ENCODE measurements at regions of chr1 and their contacts with region 1.

Region 1: GRCh38 chr1:99707535-99708142 is 58.8 kb downstream of the FRRS1 start:
- DNase-seq: peak; percentile 86
- H3K4me3 ChIP-seq: no peak overlapping the region
- H3K27ac ChIP-seq: no peak overlapping the region
- H3K4me1 ChIP-seq: peaks cover 4% of the 10 kb centered on the region
- H3K27me3 ChIP-seq: no peaks in the 10 kb centered on the region
- CTCF ChIP-seq: peak; percentile 58 to 71
- POLR2A ChIP-seq: no peak

Region 2: DNA sequence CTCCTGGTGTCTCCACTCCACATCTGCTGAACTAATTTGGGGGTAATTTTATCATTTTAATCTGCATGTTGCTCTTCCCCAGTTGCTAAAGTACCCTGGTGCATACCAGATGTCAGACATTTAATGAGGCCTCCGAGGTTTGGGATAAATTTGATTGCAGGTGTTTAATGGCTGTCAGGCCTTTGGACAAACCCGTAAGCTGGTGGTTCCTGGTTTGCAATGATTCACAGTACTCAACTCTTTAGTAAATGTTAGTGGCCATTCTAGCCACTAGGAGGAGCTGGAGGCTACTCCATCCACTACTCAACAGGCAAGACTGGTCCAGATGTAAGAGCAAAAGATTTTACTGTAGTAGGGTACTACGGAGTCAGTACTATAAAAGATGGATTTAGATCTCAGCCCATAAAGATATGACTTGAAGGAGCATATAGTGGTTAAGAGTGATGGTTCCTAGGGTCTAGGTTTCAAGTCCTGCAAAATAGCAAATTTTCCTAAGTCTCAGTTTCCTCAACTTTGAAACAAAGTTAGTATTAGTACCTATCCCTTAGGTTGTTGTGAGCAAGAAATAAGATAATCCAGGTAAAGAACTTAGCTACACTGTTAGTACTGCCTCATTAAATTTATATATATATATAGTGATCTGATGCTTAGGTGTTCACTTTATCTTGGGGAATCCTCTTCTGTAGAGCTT is 913.3 kb before region 1 on chr1:
- CTCF ChIA-PET with region 1: interaction called, 25 read pairs
- POLR2A ChIA-PET with region 1: no interaction called
- dilution Hi-C with region 1: no loop called
- intact Hi-C with region 1: loop called (anchors 1 kb)
- DNase-seq: peak; percentile 80
- H3K4me3 ChIP-seq: no peak overlapping the region
- H3K27ac ChIP-seq: no peak overlapping the region
- H3K4me1 ChIP-seq: no peaks in the 10 kb centered on the region
- H3K27me3 ChIP-seq: peaks cover 13 to 18% of the 10 kb centered on the region in 2 experiments
- CTCF ChIP-seq: peak; percentile 62 to 69
- POLR2A ChIP-seq: no peak

Region 3: GRCh38 chr1:99180343-99180808 is 527.3 kb before region 1 on chr1:
- CTCF ChIA-PET with region 1: interaction called, 63 read pairs
- POLR2A ChIA-PET with region 1: no interaction called
- dilution Hi-C with region 1: no loop called
- intact Hi-C with region 1: loop called (anchors 1 kb)
- DNase-seq: peak; percentile 90
- H3K4me3 ChIP-seq: no peak overlapping the region
- H3K27ac ChIP-seq: no peak overlapping the region
- H3K4me1 ChIP-seq: no peaks in the 10 kb centered on the region
- H3K27me3 ChIP-seq: no peaks in the 10 kb centered on the region
- CTCF ChIP-seq: peak; percentile 57 to 68
- POLR2A ChIP-seq: no peak

Region 4: DNA sequence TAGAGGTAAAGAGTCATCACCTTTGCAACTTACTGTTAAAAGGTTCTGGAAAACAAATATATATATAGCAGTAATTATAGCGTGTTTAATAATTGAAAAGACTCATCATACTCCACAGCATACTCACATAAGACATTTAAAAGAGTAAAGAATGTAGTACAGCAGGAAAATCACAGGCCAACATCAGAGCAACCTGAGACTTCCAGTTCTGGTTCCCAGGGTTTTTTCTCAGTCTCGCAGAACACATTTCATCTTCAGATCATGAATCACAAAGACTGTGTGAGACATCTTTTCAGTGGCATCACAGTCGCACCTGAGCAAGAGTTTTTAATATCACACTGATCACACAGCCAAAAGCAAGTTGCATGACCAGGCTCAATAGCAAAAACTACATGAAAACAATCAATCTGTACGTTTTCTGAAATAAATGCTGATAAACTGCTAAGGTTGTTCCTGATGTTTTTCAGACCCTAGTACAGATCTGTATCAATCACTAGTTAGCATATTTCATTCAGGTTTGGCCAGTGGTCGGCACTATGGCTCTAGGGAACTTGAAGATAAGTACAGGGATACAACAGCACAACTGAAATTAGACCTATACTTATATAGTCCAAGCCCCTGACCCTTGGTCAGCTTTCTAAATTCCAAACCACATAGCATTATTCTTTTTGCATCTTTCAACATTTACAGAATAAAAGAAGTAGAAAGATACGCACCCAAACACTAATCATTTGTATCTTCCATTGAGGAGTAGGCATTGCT is 300.8 kb before region 1 on chr1:
- CTCF ChIA-PET with region 1: interaction called, 3 read pairs
- POLR2A ChIA-PET with region 1: no interaction called
- dilution Hi-C with region 1: no loop called
- intact Hi-C with region 1: loop called (anchors 5 kb)
- DNase-seq: peak; percentile 17
- H3K4me3 ChIP-seq: no peak overlapping the region
- H3K27ac ChIP-seq: no peak overlapping the region
- H3K4me1 ChIP-seq: no peaks in the 10 kb centered on the region
- H3K27me3 ChIP-seq: peaks cover 0 to 2% of the 10 kb centered on the region in 2 experiments
- CTCF ChIP-seq: no peak
- POLR2A ChIP-seq: no peak

Region 5: GRCh38 chr1:99786751-99787501 is 79.3 kb after region 1 on chr1:
- CTCF ChIA-PET with region 1: no interaction called
- POLR2A ChIA-PET with region 1: no interaction called
- dilution Hi-C with region 1: no loop called
- intact Hi-C with region 1: no loop called
- DNase-seq: no peak
- H3K4me3 ChIP-seq: no peak overlapping the region
- H3K27ac ChIP-seq: no peak overlapping the region
- H3K4me1 ChIP-seq: no peaks in the 10 kb centered on the region
- H3K27me3 ChIP-seq: peaks cover 10 to 12% of the 10 kb centered on the region in 2 experiments
- CTCF ChIP-seq: no peak
- POLR2A ChIP-seq: no peak

Region 6: DNA sequence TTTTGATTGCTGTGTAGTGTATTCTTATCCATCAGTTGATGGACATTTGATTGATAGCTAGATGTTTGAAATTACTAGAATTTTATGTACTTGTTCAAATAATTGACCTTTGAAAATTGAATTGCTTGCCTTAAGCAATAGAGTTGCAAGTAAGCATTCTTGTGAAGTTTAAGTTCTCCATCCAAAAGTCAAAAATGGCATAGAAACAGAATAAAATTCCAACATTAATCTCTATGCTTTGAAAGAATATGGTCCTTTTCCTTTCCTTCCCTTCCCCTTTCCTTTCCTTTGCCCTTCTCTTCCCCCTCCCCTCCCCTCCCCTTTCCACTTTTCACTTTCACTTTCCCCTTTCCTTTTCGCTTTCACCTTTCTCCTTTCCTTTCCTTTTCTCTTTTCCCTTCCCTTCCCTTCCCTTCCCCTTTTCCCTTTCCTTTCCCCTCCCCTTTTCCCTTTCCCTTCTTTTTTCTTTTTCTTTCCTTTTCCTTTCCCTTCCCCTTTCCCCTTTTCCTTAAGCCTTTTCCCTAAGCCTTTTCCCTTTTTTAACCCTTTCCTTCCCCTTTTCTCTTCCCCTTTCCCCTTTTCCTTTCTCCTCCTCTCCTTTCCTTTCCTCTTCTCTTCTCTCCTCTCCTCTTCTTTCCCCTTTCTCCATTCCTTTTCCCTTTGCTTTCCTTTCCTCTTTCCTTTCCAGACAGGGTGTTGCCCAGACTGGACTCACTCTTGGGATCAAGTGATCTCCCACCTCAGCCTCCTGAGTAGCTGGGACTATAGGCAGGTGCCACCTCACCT is 357.7 kb after region 1 on chr1:
- CTCF ChIA-PET with region 1: no interaction called
- POLR2A ChIA-PET with region 1: no interaction called
- dilution Hi-C with region 1: no loop called
- intact Hi-C with region 1: no loop called
- DNase-seq: no peak
- H3K4me3 ChIP-seq: no peak overlapping the region
- H3K27ac ChIP-seq: no peak overlapping the region
- H3K4me1 ChIP-seq: no peaks in the 10 kb centered on the region
- H3K27me3 ChIP-seq: no peaks in the 10 kb centered on the region
- CTCF ChIP-seq: no peak
- POLR2A ChIP-seq: no peak

Region 7: GRCh38 chr1:100100202-100100601 is 392.6 kb after region 1 on chr1:
- CTCF ChIA-PET with region 1: no interaction called
- POLR2A ChIA-PET with region 1: no interaction called
- dilution Hi-C with region 1: no loop called
- intact Hi-C with region 1: no loop called
- DNase-seq: no peak
- H3K4me3 ChIP-seq: no peak overlapping the region
- H3K27ac ChIP-seq: no peak overlapping the region
- H3K4me1 ChIP-seq: no peaks in the 10 kb centered on the region
- H3K27me3 ChIP-seq: no peaks in the 10 kb centered on the region
- CTCF ChIP-seq: no peak
- POLR2A ChIP-seq: no peak